ENCODE measurements at regions of chr21 and their contacts with region 1.

Region 1: GRCh38 chr21:21324297-21324696 is 326.1 kb downstream of the NCAM2 start:
- DNase-seq: no peak
- H3K4me3 ChIP-seq: no peak overlapping the region
- H3K27ac ChIP-seq: no peak overlapping the region
- H3K4me1 ChIP-seq: peaks cover 10% of the 10 kb centered on the region
- H3K27me3 ChIP-seq: no peaks in the 10 kb centered on the region
- CTCF ChIP-seq: no peak

Region 2: DNA sequence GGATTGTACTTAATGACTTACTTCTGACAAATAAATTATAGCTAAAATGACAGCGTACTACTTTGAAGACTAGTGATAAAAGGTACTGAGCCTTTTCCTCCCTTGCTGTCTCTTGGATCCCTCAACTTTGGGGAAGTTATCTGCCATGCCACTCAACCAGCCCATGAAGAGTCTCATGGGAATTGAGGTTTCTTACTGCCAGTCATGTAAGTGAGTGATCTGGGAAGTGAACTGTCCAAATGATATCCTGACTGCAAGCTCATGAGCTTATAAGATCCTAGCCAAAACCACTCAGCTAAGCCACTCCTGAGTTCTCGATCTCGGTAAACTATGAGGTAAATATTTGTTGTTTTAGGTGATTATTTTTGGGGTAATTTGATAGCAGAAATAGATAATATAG is 78.3 kb before region 1 on chr21:
- CTCF ChIA-PET with region 1: no interaction called
- POLR2A ChIA-PET with region 1: interaction called, 16 read pairs
- intact Hi-C with region 1: no loop called
- DNase-seq: no peak
- H3K4me3 ChIP-seq: no peak overlapping the region
- H3K27ac ChIP-seq: no peak overlapping the region
- H3K4me1 ChIP-seq: no peaks in the 10 kb centered on the region
- H3K27me3 ChIP-seq: no peaks in the 10 kb centered on the region
- CTCF ChIP-seq: no peak

Region 3: DNA sequence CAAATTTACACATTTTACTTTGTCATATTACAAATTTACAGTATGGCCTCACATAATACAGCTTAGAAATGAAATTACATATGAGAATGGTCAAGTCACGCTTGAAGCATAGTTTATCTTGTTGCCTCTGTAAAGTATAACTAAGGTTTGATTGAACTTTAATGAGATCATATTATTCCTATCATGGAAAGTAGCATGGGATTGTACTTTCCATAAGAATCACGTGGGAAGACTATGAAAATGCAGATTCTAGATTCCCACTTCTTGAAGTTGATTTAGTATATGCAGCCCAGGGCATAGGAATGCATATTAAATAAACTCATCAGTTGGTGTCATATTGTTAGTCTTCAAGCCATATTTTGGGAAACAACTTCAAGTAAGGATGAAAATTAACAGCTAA is 16.7 kb after region 1 on chr21:
- CTCF ChIA-PET with region 1: no interaction called
- POLR2A ChIA-PET with region 1: no interaction called
- intact Hi-C with region 1: no loop called
- DNase-seq: no peak
- H3K4me3 ChIP-seq: no peak overlapping the region
- H3K27ac ChIP-seq: no peak overlapping the region
- H3K4me1 ChIP-seq: no peaks in the 10 kb centered on the region
- H3K27me3 ChIP-seq: no peaks in the 10 kb centered on the region
- CTCF ChIP-seq: no peak

Measured in A673 (cell line).